ENCODE measurements at regions of chrX and their contacts with region 1.

Region 1: DNA sequence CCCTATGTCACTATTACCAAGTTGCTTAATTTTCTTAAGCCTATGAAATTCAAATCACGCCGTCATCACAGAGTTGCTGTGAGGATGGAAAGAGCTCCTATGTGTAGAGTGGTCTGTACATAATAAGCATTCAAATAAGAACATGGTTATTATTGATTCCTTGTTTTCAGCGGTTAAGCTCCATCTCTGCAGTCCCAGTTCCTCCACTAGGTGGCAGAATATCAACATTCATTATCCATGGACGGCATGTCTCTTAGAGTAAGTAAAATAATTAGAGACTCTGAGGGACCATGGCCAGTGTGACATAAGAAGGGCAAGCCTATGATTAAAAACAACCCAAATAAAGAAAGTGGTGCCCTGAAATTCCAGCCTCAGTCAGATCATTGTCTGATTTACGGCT is 132.5 kb upstream of the NHS start:
- DNase-seq: peak in 1 of 2 donors; percentile 18
- ATAC-seq: peak; percentile 63

Region 2: GRCh38 chrX:17361620-17362019 is 119.2 kb after region 1 on chrX:
- intact Hi-C with region 1: loop called in 1 of 2 experiments (anchors 10 kb)
- DNase-seq: no peak
- ATAC-seq: no peak

Region 3: DNA sequence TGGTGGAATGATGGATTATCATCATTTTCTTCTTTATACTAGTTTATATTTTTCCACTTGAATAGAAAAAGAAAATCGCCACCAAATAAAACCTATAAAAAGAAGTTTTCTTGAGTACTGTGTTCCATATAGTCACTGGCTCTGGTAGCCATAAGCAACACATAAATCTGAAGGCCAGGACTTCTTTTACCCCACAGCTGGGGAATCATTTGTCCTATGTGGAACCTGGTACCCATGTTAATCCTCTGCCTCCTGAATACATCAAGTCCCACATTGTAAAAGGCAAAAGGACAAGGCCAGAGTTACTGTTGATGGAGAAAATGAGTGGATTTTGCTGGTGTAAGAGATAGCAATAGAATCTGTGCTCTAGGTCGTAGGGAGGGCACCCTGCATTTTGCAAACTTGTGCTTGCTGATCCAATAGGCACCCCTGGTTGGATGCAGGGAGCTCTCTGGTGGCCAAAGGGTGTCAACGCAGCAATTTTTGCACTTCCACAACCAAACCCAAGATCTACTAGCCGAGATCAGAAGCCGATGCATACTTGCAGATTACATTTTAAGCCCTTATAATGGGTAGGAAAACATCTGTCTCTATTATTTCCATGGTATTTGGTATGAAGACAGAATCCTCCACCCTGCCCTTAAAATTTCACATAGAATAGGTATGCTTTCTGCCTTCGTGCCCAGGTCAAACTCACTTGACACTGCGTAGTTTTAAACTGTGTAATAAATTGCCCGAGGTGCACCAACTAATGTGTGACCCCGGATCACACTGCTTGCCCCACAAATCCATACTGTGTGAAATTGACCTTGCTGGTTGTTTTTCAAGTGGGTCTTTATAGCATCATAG is 348.6 kb after region 1 on chrX:
- intact Hi-C with region 1: loop called in 1 of 2 experiments (anchors 5 kb)
- DNase-seq: peak; percentile 32 to 54
- ATAC-seq: peak; percentile 82

Region 4: GRCh38 chrX:17689971-17690409 is 447.5 kb after region 1 on chrX:
- intact Hi-C with region 1: loop called in 1 of 2 experiments (anchors 5 kb)
- DNase-seq: peak; percentile 30 to 34
- ATAC-seq: peak; percentile 93